Caco-2 (cell line): ENCODE measurements at regions of chr17 and their contacts with region 1.

Region 1: DNA sequence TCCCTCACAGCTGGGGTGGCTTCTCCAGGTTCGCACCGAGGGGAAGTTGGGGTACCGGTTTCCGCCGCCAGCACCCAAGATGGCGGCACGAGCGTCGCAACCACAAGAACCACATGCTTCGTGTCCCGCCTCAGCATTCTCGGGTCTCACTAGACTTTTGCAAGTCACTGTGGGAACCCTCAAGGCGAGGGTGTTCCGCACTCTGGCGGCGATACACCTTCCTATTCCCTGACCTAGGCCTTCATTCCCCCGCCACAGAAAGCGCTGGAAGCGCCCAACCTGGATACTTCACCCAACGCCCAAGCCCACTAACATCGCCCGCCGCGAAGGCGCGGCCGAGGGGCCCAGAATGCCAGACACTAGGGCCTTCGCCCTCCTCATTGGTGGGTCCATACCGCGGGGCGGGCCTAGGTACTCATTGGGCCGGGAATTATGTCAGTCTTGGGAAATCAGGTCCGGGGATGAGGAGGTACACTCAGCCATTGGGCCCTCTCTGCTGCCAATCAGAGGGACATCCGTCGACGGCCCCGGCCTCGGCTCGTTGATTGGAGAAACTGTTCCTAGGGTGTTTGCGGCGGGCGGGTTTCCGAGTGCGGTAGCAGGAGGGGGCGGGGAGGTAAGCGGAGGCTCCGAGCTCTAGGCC is at the start of gene NFE2L1:
- DNase-seq: peak; percentile 100
- H3K4me3 ChIP-seq: peak within 1 kb of the TSS; percentile 84
- H3K4me3 Mint-ChIP-seq: peak within 1 kb of the TSS; percentile 87
- H3K27ac Mint-ChIP-seq: peak within 1 kb of the TSS; percentile 100
- H3K4me1 ChIP-seq: peaks cover 22% of the 10 kb centered on the region
- H3K4me1 Mint-ChIP-seq: peaks cover 30% of the 10 kb centered on the region
- H3K27me3 ChIP-seq: no peaks in the 10 kb centered on the region
- H3K27me3 Mint-ChIP-seq: no peaks in the 10 kb centered on the region
- CTCF ChIP-seq: no peak
- total RNA-seq, gene NFE2L1: 322 and 356 TPM in 2 replicates

Region 2: GRCh38 chr17:47776330-47777197 is 271.3 kb before region 1 on chr17:
- CTCF ChIA-PET with region 1: no interaction called
- POLR2A ChIA-PET with region 1: no interaction called
- intact Hi-C with region 1: no loop called
- DNase-seq: peak; percentile 60 to 79
- H3K4me3 ChIP-seq: no peak overlapping the region
- H3K4me3 Mint-ChIP-seq: no peak overlapping the region
- H3K27ac Mint-ChIP-seq: no peak overlapping the region
- H3K4me1 ChIP-seq: no peaks in the 10 kb centered on the region
- H3K4me1 Mint-ChIP-seq: no peaks in the 10 kb centered on the region
- H3K27me3 ChIP-seq: no peaks in the 10 kb centered on the region
- H3K27me3 Mint-ChIP-seq: peaks cover 28% of the 10 kb centered on the region
- CTCF ChIP-seq: peak; percentile 94 to 99

Region 3: GRCh38 chr17:47949136-47949759 is 98.6 kb before region 1 on chr17:
- CTCF ChIA-PET with region 1: interaction called, 13 read pairs
- POLR2A ChIA-PET with region 1: interaction called, 11 read pairs
- intact Hi-C with region 1: no loop called
- DNase-seq: peak; percentile 96 to 99
- H3K4me3 ChIP-seq: peak overlapping the region; percentile 1; the same call in 1 of the 2 replicates
- H3K4me3 Mint-ChIP-seq: peak overlapping the region; percentile 55
- H3K27ac Mint-ChIP-seq: peak overlapping the region; percentile 58
- H3K4me1 ChIP-seq: peaks cover 14% of the 10 kb centered on the region
- H3K4me1 Mint-ChIP-seq: peaks cover 28% of the 10 kb centered on the region
- H3K27me3 ChIP-seq: no peaks in the 10 kb centered on the region
- H3K27me3 Mint-ChIP-seq: no peaks in the 10 kb centered on the region
- CTCF ChIP-seq: peak; percentile 100

Region 4: DNA sequence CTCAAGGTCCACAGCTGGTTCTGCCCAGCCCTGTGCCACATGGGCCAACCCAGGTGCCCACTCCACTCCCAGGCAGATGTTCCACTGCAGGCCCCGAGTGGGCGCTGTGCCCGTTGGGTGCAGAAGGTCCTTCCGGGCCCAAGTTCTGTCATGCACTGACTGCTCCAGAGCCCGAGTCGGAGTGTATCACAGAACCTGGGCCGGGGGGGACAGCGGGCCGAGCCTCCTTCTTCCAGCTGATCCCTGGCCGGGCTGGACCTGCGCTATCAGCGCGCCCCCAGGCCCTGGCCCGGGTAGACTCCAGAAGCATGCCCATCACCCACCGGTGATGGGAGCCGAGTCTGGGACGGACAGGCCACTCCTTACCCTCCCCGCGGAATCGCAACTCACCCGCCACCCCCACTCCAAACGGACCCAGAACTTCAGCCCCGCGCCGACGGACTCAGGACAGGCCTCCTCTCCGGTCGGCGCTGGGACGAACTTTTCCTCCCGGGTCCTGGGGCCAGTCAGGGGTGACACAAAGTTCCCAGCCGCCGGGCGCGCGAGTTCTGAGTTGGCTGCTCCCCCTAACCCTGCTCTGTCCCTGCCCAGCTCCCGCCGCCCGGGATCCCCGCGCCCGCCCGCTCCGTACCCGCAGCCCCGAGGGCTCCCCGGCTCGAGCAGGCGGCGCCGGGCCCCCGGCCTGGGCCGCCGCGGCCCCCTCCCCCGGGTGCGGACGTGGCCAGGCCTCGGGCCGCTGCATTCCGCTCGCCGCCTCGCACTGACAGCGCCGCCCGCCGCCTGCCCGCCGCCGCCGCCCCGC is 10.6 kb before region 1 on chr17 and contains the start of gene COPZ2:
- CTCF ChIA-PET with region 1: interaction called, 27 read pairs
- POLR2A ChIA-PET with region 1: interaction called, 25 read pairs
- intact Hi-C with region 1: loop called (anchors 1 kb)
- DNase-seq: peak in 1 of 2 experiments; percentile 66
- H3K4me3 ChIP-seq: peak within 1 kb of the TSS; percentile 60
- H3K4me3 Mint-ChIP-seq: peak within 1 kb of the TSS; percentile 75
- H3K27ac Mint-ChIP-seq: peak within 1 kb of the TSS; percentile 6
- H3K4me1 ChIP-seq: peaks cover 9% of the 10 kb centered on the region; the same call in 1 of the 2 replicates
- H3K4me1 Mint-ChIP-seq: no peaks in the 10 kb centered on the region
- H3K27me3 ChIP-seq: no peaks in the 10 kb centered on the region
- H3K27me3 Mint-ChIP-seq: peaks cover 2% of the 10 kb centered on the region
- CTCF ChIP-seq: peak; percentile 37 to 58
- total RNA-seq, gene COPZ2: 2.0 and 6.7 TPM in 2 replicates

Region 5: GRCh38 chr17:48074315-48075081 is 26.6 kb after region 1 on chr17:
- CTCF ChIA-PET with region 1: interaction called, 11 read pairs
- POLR2A ChIA-PET with region 1: interaction called, 13 read pairs
- intact Hi-C with region 1: loop called (anchors 1 kb)
- DNase-seq: peak; percentile 89 to 92
- H3K4me3 ChIP-seq: no peak overlapping the region
- H3K4me3 Mint-ChIP-seq: no peak overlapping the region
- H3K27ac Mint-ChIP-seq: no peak overlapping the region
- H3K4me1 ChIP-seq: no peaks in the 10 kb centered on the region
- H3K4me1 Mint-ChIP-seq: no peaks in the 10 kb centered on the region
- H3K27me3 ChIP-seq: no peaks in the 10 kb centered on the region
- H3K27me3 Mint-ChIP-seq: no peaks in the 10 kb centered on the region
- CTCF ChIP-seq: peak; percentile 97 to 98

Region 6: DNA sequence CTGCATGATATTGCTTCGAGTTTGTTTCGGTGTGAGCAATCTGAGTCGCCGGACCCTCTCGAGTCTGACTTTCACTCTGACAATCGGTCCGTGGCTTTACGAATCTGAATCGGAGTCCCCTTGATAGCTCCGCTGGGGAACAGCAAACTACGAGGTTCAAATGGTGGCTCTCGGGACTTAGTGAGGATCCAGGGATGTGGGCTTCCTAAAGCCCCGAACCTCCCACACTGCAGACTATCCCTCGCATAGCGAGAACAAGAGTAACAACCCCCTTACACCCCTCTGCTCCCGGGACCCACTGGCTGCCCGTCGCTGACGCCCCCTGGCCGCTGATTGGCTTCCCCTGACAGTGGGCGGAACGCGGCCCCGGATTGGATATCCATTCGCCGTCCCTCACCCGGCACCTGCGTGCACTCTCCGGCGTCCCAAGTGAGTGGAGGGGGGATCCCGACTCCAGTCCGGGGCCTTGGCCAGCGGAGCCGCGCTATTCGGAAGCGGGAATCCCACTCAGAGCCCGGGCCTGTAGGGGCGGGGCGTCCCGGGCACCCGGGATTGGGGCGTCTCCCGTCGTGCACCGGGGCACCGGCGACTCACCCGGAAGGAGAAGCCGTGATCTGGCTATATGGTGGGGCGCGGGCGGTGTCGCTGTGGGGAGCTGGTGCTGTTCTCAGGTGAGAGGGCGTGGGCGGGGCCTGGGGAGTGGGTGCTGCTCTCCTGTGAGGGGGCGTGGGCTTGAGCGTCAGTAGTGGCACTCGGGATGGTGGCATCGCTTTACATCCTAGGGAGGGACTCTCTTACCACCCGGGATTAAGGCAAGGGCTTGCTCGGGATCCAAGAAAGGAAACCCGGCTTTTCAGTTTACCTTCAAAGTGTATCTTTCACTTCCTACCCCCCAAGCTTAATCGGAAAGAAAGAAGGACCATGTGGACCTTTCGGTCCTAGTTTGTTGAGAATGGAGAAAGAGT is 59.6 kb after region 1 on chr17 and contains the start of gene SNX11:
- CTCF ChIA-PET with region 1: interaction called, 4 read pairs
- POLR2A ChIA-PET with region 1: interaction called, 37 read pairs
- intact Hi-C with region 1: no loop called
- DNase-seq: peak; percentile 100
- H3K4me3 ChIP-seq: peak within 1 kb of the TSS; percentile 60
- H3K4me3 Mint-ChIP-seq: peak within 1 kb of the TSS; percentile 95
- H3K27ac Mint-ChIP-seq: peak within 1 kb of the TSS; percentile 95
- H3K4me1 ChIP-seq: 0 out of 2 replicates have a peak, but pooled peaks cover 6% of the 10 kb centered on the region
- H3K4me1 Mint-ChIP-seq: peaks cover 7% of the 10 kb centered on the region
- H3K27me3 ChIP-seq: no peaks in the 10 kb centered on the region
- H3K27me3 Mint-ChIP-seq: no peaks in the 10 kb centered on the region
- CTCF ChIP-seq: peak; percentile 33 to 48
- total RNA-seq, gene SNX11: 36.7 and 40.7 TPM in 2 replicates